ENCODE measurements at regions of chr14 and their contacts with region 1.

Region 1: GRCh38 chr14:55051426-55052268 is at the start of gene MAPK1IP1L:
- DNase-seq: peak; percentile 97
- total RNA-seq, gene MAPK1IP1L: 75.2 TPM

Region 2: DNA sequence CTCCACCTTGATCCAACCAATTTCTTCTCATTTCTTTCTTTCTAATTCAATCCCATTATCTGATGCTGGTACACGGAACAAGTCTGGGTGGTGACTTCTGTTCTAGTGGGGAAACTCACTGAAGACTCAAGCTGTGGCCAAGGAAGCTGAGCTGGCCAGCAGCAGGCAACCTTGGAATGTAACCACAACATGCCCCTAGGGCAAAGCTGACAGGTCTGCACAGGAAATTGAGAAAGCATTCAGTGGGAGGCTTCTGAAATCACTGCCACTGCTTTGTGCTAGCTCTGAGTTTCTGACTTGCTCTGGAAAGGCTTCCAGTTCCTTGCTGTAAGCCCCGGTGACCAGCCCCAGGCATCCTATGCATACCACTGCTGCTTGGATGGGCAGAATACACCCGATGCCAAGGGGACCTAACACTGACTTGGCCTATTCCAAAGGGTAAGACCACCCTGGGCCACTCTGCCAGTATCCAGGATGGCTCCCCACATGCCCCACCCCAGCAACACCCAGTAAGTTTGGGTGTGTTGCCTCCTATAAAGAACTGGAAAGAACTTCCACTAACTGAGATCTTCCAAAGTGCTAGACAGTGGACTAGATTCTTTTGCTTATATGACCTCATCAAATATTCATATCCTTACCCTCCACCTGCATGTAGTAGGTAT is 739.4 kb before region 1 on chr14:
- intact Hi-C with region 1: no loop called
- DNase-seq: no peak

Region 3: GRCh38 chr14:54902521-54903420 is 148.9 kb before region 1 on chr14 and contains the start of gene GCH1:
- intact Hi-C with region 1: loop called (anchors 10 kb)
- DNase-seq: peak; percentile 91
- total RNA-seq, gene GCH1: 2.6 TPM

Region 4: GRCh38 chr14:55026793-55027561 is 24.7 kb before region 1 on chr14 and contains the starts of genes SOCS4 and WDHD1:
- intact Hi-C with region 1: loop called (anchors 2 kb)
- DNase-seq: peak; percentile 98
- total RNA-seq, gene SOCS4: 19.8 TPM
- total RNA-seq, gene WDHD1: 1.8 TPM

Region 5: DNA sequence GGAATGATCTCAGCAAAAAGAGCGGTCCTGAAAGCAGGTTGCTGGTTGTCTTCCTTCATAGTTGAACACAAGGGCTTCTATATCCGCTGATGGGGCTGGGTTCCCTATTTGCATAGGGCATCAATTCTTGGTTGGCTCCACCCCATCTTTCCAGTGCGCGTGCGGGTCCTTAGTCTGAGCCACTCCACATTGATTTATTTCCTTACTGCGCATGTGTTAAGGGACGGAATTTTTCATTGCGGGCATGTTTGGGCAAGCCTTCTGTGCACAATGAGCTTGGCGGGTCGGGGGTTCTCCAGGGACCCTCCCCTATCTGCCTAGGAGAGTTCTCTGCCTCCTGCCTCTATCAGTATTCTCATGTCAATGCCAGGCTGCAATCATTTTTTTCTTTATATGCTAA is 161.0 kb after region 1 on chr14:
- intact Hi-C with region 1: no loop called
- DNase-seq: no peak